CD8-positive, alpha-beta T cell (primary cell): ENCODE measurements at regions of chr2 and their contacts with region 1.

Region 1: DNA sequence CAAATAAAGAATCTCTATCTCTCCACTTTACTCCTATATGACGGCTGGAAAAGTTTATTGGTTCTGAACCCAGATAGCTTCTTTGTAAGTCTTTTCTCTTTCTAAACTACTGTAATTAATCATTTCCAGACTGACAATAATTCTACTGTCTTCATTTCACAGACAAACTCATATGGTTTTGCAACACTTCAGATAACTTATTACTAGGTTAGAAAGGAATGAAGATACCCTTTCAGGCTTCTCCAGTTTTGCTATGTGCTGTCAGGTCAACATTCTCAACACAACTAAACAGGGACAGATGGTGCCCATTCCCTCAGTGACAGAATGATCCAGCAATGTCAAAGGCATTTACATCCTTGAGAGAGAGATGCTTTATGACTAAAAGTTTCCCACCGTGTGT is 198.5 kb upstream of the ITGA4 start:
- DNase-seq: no peak
- ATAC-seq: no peak
- H3K4me3 ChIP-seq: no peak overlapping the region
- H3K4me3 Mint-ChIP-seq: no peak overlapping the region
- H3K27ac ChIP-seq: no peak overlapping the region
- H3K27ac Mint-ChIP-seq: no peak overlapping the region
- H3K4me1 ChIP-seq: peaks cover 19% of the 10 kb centered on the region
- H3K4me1 Mint-ChIP-seq: peaks cover 47% of the 10 kb centered on the region
- H3K27me3 ChIP-seq: no peaks in the 10 kb centered on the region
- H3K27me3 Mint-ChIP-seq: no peaks in the 10 kb centered on the region
- CTCF ChIP-seq: no peak

Region 2: DNA sequence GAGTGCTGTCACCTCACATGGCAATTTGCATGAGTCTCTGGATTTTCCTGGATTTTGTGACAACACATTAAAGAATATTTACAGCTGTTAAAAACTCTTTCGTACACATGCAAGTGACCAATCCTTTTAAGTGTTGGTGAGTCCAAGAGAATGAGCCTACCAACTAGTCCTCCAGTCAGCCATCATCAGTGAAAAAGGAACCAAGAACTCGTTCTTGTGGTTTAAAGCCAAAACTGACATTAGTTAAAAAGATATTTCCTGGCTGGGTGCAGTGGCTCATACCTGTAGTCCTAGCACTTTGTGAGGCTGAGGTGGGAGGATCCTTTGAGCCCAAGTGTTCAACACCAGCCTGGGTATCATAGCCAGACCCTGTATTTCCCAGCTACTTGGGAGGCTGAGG is 16.9 kb before region 1 on chr2:
- CTCF ChIA-PET with region 1: interaction called, 3 read pairs
- POLR2A ChIA-PET with region 1: interaction called, 4 read pairs
- intact Hi-C with region 1: loop called in 1 of 2 experiments (anchors 2 kb)
- DNase-seq: no peak
- ATAC-seq: no peak
- H3K4me3 ChIP-seq: no peak overlapping the region
- H3K4me3 Mint-ChIP-seq: no peak overlapping the region
- H3K27ac ChIP-seq: no peak overlapping the region
- H3K27ac Mint-ChIP-seq: peak overlapping the region; percentile 60
- H3K4me1 ChIP-seq: peaks cover 18% of the 10 kb centered on the region
- H3K4me1 Mint-ChIP-seq: peaks cover 55% of the 10 kb centered on the region
- H3K27me3 ChIP-seq: no peaks in the 10 kb centered on the region
- H3K27me3 Mint-ChIP-seq: no peaks in the 10 kb centered on the region
- CTCF ChIP-seq: no peak

Region 3: DNA sequence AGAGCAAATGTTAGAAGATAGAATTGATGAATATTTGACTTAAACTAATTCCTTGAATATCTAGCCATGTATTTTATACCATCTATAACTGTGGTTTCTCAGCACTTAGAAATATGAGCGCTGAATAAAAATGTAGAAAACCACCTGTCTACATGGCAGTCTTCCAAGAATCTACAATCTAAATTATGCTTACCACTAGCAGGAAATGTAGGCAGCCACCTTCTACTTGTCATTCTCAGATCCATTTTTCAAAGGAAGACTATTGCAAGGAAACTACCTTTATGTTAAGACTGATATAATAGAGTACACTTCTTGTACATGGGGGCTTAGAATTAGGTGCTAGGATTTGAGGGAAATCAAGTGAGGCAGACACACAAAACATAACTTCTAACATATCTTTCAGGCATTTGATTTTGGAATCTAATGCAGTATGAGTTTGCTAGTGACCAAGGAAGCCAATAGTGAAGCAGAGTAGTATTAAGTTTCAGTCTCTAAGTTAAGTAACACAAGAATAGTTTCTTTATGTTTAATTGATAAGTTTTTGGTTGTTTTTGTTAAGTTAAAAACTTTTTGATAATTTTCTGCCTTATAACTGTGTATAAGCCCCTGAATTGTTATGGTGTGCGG is 22.6 kb after region 1 on chr2:
- CTCF ChIA-PET with region 1: interaction called, 5 read pairs
- POLR2A ChIA-PET with region 1: interaction called, 3 read pairs
- intact Hi-C with region 1: loop called in 1 of 2 experiments (anchors 2 kb)
- DNase-seq: peak in 2 of 9 experiments; percentile 67 to 83
- ATAC-seq: peak; percentile 89
- H3K4me3 ChIP-seq: no peak overlapping the region
- H3K4me3 Mint-ChIP-seq: peak overlapping the region; percentile 6
- H3K27ac ChIP-seq: peak overlapping the region in 1 of 2 experiments; percentile 39
- H3K27ac Mint-ChIP-seq: peak overlapping the region; percentile 86
- H3K4me1 ChIP-seq: peaks cover 29% of the 10 kb centered on the region
- H3K4me1 Mint-ChIP-seq: peaks cover 54% of the 10 kb centered on the region
- H3K27me3 ChIP-seq: no peaks in the 10 kb centered on the region
- H3K27me3 Mint-ChIP-seq: no peaks in the 10 kb centered on the region
- CTCF ChIP-seq: no peak